Right cardiac atrium (tissue), 5 donors: ENCODE measurements at regions of chr3 and their contacts with region 1.

Region 1: GRCh38 chr3:194009892-194010533 is 125.9 kb upstream of the HES1 start:
- DNase-seq: no peak
- ATAC-seq: no peak
- H3K4me3 ChIP-seq: no peak overlapping the region
- H3K27ac ChIP-seq: no peak overlapping the region
- H3K4me1 ChIP-seq: no peaks in the 10 kb centered on the region
- H3K27me3 ChIP-seq: no peaks in the 10 kb centered on the region

Region 2: GRCh38 chr3:193297421-193297820 is 712.6 kb before region 1 on chr3:
- intact Hi-C with region 1: no loop called
- DNase-seq: no peak
- ATAC-seq: no peak
- H3K4me3 ChIP-seq: no peak overlapping the region
- H3K27ac ChIP-seq: no peak overlapping the region
- H3K4me1 ChIP-seq: no peaks in the 10 kb centered on the region
- H3K27me3 ChIP-seq: no peaks in the 10 kb centered on the region

Region 3: DNA sequence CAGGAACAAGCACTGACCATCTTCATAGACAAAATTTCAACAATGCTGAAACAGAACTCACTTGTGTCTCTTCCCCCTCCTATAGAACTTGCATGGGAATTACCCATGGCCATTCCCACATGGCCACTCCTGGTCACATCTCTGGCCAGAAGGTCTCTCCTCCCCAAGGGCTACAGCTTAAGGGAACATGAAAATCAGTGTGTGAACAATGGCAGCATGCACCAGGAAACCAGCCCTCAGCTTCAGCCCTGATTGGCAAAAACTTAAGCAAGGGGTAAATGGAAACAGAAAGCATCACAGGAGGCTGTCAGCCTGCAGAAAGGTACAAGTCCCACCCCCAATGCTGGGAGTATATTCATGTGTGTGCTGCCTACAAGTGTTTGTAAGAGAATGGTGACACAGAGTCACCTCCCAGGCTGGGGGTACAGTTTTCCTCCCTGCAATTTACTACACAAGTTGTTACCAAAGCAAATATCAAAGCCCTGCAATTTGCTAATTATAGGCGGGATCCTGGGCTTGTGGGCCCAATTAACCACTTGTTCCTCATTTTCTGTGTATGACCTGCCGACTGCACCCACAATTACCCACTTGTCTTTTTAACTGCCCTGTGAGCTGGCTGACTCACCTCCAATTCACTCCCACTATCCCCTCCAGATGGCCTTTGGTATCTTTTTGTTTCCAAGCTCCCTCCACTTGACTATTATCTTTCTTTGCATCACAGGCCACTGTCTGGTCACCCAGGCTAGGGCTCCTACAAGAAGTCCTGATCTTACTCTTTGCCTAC is 41.5 kb after region 1 on chr3:
- intact Hi-C with region 1: loop called in 1 of 4 experiments (anchors 5 kb)
- DNase-seq: no peak
- ATAC-seq: no peak
- H3K4me3 ChIP-seq: no peak overlapping the region
- H3K27ac ChIP-seq: no peak overlapping the region
- H3K4me1 ChIP-seq: no peaks in the 10 kb centered on the region
- H3K27me3 ChIP-seq: no peaks in the 10 kb centered on the region

Region 4: GRCh38 chr3:194070634-194071409 is 60.8 kb after region 1 on chr3:
- intact Hi-C with region 1: loop called in 1 of 4 experiments (anchors 10 kb)
- DNase-seq: peak; percentile 92 to 96 (median 96)
- ATAC-seq: peak; percentile 92 to 94
- H3K4me3 ChIP-seq: peak overlapping the region; percentile 38
- H3K27ac ChIP-seq: peak overlapping the region; percentile 25
- H3K4me1 ChIP-seq: no peaks in the 10 kb centered on the region
- H3K27me3 ChIP-seq: no peaks in the 10 kb centered on the region